Activated CD4-positive, alpha-beta memory T cell treated with anti-CD3 and anti-CD28 coated beads for 36 hours (primary cell): ENCODE measurements at regions of chr1 and their contacts with region 1.

Region 1: GRCh38 chr1:89698624-89699023 is 65.7 kb downstream of the LRRC8C start:
- DNase-seq: no peak
- H3K4me3 Mint-ChIP-seq: no peak overlapping the region
- H3K27ac Mint-ChIP-seq: peak overlapping the region; percentile 77
- H3K4me1 Mint-ChIP-seq: peaks cover 90% of the 10 kb centered on the region
- H3K27me3 Mint-ChIP-seq: no peaks in the 10 kb centered on the region

Region 2: DNA sequence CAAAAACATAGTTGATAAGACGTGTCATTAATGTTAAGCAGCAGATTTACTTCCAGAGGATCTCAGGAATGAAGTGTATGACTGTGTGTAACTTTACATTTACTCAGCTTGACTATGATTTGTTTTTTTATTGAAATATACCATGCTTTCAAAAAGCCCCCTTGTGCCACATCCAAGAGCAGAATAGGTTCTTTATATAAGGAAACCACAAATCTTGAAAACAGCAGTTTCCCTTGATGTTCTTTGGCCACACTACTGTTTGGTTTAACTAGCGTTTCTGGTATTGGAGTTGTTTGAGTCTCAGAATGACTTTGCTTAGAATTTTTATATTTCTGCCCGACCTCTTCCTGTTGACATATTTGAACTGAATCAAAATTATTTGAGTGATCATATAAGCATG is 40.7 kb before region 1 on chr1:
- CTCF ChIA-PET with region 1: no interaction called
- POLR2A ChIA-PET with region 1: no interaction called
- intact Hi-C with region 1: loop called (anchors 5 kb)
- DNase-seq: no peak
- H3K4me3 Mint-ChIP-seq: no peak overlapping the region
- H3K27ac Mint-ChIP-seq: peak overlapping the region; percentile 68
- H3K4me1 Mint-ChIP-seq: peaks cover 92% of the 10 kb centered on the region
- H3K27me3 Mint-ChIP-seq: no peaks in the 10 kb centered on the region

Region 3: GRCh38 chr1:89675677-89676076 is 22.9 kb before region 1 on chr1:
- CTCF ChIA-PET with region 1: interaction called, 4 read pairs
- POLR2A ChIA-PET with region 1: interaction called, 5 read pairs
- intact Hi-C with region 1: loop called (anchors 2 kb)
- DNase-seq: no peak
- H3K4me3 Mint-ChIP-seq: no peak overlapping the region
- H3K27ac Mint-ChIP-seq: peak overlapping the region; percentile 83
- H3K4me1 Mint-ChIP-seq: peaks cover 86% of the 10 kb centered on the region
- H3K27me3 Mint-ChIP-seq: no peaks in the 10 kb centered on the region

Region 4: DNA sequence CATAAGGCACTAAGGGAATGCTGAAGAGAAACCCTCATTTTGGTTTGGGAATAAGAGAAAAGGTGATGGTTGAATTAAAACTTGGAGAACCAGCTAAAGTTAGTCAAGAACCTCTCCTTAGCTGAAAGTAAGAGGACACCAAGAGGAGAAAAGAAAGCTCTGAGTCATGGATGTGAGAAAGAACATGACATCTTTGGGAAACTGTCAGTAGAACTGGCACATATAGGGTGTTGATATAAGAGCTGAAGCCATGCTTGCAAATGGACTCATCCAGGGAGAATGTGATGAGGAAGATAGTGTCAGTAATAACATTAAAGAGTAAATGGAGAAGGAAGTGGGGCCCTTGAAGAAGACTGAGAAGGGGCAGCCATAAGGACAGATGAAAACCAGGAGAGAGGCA is 11.4 kb before region 1 on chr1:
- CTCF ChIA-PET with region 1: interaction called, 4 read pairs
- POLR2A ChIA-PET with region 1: no interaction called
- intact Hi-C with region 1: loop called (anchors 1 kb)
- DNase-seq: no peak
- H3K4me3 Mint-ChIP-seq: no peak overlapping the region
- H3K27ac Mint-ChIP-seq: peak overlapping the region; percentile 88
- H3K4me1 Mint-ChIP-seq: peaks cover 74% of the 10 kb centered on the region
- H3K27me3 Mint-ChIP-seq: no peaks in the 10 kb centered on the region